ENCODE measurements at regions of chr10 and their contacts with region 1.

Region 1: GRCh38 chr10:79374312-79375191 is 27.3 kb downstream of the PPIF start:
- DNase-seq: peak; percentile 80 to 90
- ATAC-seq: peak; percentile 55 to 80 (median 72)
- H3K4me3 ChIP-seq: no peak overlapping the region
- H3K27ac ChIP-seq: no peak overlapping the region
- H3K4me1 ChIP-seq: peaks cover 15% of the 10 kb centered on the region
- H3K27me3 ChIP-seq: no peaks in the 10 kb centered on the region
- CTCF ChIP-seq: peak; percentile 99

Region 2: DNA sequence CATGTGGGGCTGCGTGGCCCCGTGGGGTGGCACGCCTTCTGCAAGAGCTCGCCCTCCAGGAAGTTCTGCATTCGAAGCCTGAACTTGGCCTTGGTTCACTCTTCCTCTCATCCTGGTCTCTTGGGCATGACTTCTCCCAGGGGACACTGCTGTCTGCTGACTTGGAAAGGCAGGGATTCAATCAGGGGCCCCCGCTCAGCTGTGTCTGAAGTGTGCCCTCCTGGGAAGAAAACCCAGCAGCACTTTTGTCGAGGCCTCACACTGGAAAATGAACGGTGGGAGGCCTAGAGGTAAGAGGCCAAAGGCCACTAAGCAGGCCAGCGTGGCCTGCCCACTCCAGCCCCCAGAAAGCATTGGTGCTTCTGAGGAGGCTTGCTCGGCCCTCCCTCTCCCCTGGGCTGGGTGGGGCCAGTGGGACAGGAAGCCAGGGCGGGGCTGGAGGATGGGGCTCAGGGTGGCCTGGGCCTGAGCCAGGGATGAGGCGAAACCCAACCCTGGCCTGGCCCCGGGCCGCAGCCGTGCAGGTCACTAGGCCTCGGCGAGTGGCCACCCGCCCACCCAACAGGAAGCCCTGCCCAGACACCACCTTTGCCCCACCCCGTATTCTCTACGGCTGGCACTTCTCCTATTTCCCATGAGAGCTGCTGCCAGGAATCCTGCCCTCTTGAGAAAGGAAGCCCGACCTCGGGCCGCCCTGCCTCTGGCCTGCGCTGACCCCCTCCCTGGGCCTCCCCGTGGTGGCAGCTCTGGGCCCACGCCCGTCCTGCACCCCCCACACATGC is 224.7 kb before region 1 on chr10:
- intact Hi-C with region 1: no loop called
- DNase-seq: peak; percentile 92 to 96
- ATAC-seq: peak; percentile 66 to 73 (median 71)
- H3K4me3 ChIP-seq: peak overlapping the region; percentile 28
- H3K27ac ChIP-seq: peak overlapping the region; percentile 75
- H3K4me1 ChIP-seq: peaks cover 94% of the 10 kb centered on the region
- H3K27me3 ChIP-seq: no peaks in the 10 kb centered on the region
- CTCF ChIP-seq: no peak

Region 3: GRCh38 chr10:79463578-79464496 is 89.3 kb after region 1 on chr10:
- intact Hi-C with region 1: loop called (anchors 1 to 2 kb)
- DNase-seq: peak; percentile 60 to 84
- ATAC-seq: peak; percentile 66 to 87 (median 76)
- H3K4me3 ChIP-seq: no peak overlapping the region
- H3K27ac ChIP-seq: peak overlapping the region; percentile 71
- H3K4me1 ChIP-seq: peaks cover 17% of the 10 kb centered on the region
- H3K27me3 ChIP-seq: no peaks in the 10 kb centered on the region
- CTCF ChIP-seq: no peak

Region 4: GRCh38 chr10:79487296-79488194 is 113.0 kb after region 1 on chr10:
- intact Hi-C with region 1: loop called (anchors 2 kb)
- DNase-seq: peak; percentile 53 to 78
- ATAC-seq: peak; percentile 65 to 81 (median 80)
- H3K4me3 ChIP-seq: no peak overlapping the region
- H3K27ac ChIP-seq: peak overlapping the region; percentile 51
- H3K4me1 ChIP-seq: peaks cover 5% of the 10 kb centered on the region
- H3K27me3 ChIP-seq: no peaks in the 10 kb centered on the region
- CTCF ChIP-seq: peak; percentile 70

Region 5: GRCh38 chr10:79608505-79609375 is 234.2 kb after region 1 on chr10:
- intact Hi-C with region 1: loop called (anchors 2 to 10 kb)
- DNase-seq: no peak
- ATAC-seq: peak in 3 of 4 donors; percentile 43 to 54 (median 52)
- H3K4me3 ChIP-seq: no peak overlapping the region
- H3K27ac ChIP-seq: no peak overlapping the region
- H3K4me1 ChIP-seq: no peaks in the 10 kb centered on the region
- H3K27me3 ChIP-seq: no peaks in the 10 kb centered on the region
- CTCF ChIP-seq: peak; percentile 63

Region 6: DNA sequence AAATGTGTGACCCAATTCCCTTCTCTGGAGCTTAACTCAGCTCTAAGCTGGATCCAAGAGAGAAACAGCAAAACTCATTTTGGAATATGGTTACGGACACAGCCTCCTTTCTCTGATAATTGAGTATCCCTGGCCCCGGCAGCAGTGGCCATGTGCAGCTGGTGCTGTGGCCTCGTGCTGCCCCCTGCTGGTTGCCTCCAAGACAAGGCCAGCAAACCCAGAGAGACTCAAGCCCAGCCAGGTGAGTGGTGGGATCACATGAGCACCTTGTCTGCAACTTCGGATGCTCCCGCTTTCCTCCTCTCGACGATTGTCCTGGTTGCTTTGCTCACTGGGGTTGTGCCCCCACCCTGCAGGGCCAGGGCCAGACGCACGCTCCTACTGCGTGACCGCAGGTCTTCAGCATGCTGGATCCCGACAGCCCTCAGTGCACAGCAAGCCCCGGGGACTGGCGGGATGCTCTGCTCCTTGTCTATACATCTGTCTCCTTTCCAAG is 554.9 kb after region 1 on chr10:
- intact Hi-C with region 1: loop called in 1 of 2 experiments (anchors 10 kb)
- DNase-seq: peak; percentile 79 to 90
- ATAC-seq: peak; percentile 93 to 99 (median 96)
- H3K4me3 ChIP-seq: no peak overlapping the region
- H3K27ac ChIP-seq: no peak overlapping the region
- H3K4me1 ChIP-seq: no peaks in the 10 kb centered on the region
- H3K27me3 ChIP-seq: no peaks in the 10 kb centered on the region
- CTCF ChIP-seq: peak; percentile 96